Activated naive CD4-positive, alpha-beta T cell treated with anti-CD3 and anti-CD28 coated beads for 36 hours (primary cell): ENCODE measurements at regions of chr11 and their contacts with region 1.

Region 1: DNA sequence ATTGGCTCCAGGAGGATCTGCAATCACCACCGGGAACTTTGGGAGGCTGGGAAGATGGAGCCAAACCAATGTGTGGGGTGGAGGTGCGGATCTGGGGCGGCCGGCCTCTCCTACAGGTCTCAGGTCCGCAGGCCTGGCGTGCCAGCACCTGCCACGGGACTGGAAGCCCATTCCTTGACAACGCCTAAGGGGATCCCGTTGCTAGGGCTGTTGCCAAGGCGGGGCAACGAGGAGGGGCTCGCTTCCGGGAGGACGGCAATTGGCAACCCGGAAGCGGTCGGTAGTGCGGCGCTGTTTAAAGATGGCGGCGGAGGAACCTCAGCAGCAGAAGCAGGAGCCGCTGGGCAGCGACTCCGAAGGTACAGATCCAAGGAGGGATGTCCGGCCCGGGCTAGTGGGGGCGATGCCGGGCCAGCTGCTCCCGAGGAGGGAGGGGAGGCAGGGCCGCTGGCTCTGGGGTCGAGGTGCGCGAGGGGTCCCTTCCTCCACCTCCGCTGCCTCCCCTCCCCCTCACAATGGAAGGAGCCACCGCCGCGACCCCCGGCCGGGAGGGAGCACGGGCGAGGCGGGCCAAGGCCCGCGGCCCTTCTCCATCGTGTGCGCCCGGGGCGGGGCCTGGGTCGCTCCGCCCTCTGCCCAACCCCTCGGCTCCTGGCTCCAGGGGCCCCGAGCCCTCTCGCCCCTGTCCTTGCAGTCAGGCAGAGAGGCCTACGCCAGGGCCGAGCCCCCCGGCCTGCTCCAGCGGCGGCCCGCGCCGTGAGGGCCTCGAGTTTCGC is at the start of gene OTUB1:
- DNase-seq: peak; percentile 91
- H3K4me3 Mint-ChIP-seq: peak within 1 kb of the TSS; percentile 94
- H3K27ac Mint-ChIP-seq: peak within 1 kb of the TSS; percentile 93
- H3K4me1 Mint-ChIP-seq: peaks cover 30% of the 10 kb centered on the region
- H3K27me3 Mint-ChIP-seq: no peaks in the 10 kb centered on the region
- total RNA-seq, gene OTUB1: 61.9 to 63.0 TPM

Region 2: DNA sequence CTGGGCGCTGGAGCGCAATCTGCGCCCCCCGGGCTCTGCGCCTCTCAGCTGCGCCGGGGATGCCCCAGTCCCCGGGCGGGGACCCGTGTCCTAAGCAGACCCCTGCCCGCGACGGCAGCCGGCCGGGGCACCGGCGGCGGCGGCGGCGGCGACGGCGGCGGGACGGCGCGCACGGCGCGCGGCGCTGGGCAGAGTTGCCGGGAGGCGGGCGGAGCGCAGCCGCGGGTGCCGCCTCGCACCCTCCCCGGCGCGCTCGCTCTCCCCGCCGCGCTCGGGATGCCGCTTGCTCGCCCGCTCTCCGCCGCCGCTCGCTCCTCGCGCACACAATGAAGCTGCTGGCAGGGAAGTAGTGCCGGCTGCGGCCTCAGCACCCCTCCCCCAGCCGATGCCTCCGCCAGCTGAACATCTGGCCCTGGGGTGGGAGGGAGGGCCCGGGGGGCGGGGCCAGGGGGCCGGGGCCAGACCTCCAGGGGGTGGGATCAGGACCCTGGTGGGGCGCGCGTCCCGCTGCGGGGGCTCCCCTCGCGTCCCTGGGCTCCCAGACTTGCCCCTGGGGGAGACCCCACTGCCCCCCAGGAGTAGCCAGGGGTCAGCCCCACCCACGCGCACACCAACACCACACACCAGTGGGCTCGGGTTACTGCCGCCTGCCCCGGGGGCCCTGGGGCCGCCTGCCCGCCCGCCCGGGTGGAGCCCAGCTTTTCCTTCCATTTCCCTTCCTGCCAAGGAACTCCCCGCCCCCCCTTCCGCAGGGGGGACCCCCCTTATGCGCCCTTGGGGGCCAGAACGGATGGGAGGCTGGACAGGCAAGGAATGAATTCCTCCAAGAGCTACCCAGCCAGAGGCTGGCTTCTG is 69.3 kb before region 1 on chr11 and contains the start of gene RCOR2:
- CTCF ChIA-PET with region 1: no interaction called
- intact Hi-C with region 1: loop called (anchors 5 kb)
- DNase-seq: peak; percentile 63
- H3K4me3 Mint-ChIP-seq: peak within 1 kb of the TSS; percentile 79
- H3K27ac Mint-ChIP-seq: no peak within 1 kb of the TSS
- H3K4me1 Mint-ChIP-seq: peaks cover 15% of the 10 kb centered on the region
- H3K27me3 Mint-ChIP-seq: no peaks in the 10 kb centered on the region
- total RNA-seq, gene RCOR2: 0.17 to 0.19 TPM

Region 3: DNA sequence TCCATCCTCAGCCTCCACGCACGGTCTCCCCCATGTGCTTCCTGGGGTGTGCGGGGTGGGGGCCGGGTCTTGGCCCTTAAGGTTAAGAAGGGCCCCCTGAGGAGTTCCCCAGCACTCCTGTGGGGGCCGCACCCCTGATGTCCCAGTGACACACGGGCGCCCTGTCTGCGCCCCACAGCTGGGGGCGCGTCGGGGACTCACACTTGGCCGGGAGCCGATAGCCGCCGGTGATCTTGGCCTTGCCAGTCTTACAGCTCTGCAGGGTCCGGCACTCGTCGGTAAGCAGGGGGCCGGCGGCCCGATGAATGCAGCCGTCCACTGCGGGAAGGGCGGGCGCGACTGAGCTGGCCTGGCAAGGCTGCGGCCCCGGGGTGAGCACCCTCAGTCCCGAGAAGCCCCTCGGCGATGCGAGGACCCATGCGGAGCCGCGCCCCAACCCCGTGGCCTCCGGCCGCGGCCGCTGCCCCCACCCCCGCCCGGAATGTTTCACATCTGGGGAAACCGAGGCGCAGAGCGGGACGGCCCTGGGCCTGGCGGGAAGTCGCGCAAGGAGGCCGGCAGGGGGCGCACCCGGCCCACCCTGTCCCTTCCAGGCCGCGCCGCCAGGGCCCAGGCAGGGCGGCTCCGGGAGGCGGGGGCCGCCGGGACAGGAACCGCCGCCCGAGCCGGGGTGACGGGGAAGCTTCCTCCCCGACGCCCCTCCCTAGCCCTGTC is 13.8 kb after region 1 on chr11:
- CTCF ChIA-PET with region 1: interaction called, 11 read pairs
- intact Hi-C with region 1: no loop called
- DNase-seq: peak; percentile 72
- H3K4me3 Mint-ChIP-seq: no peak overlapping the region
- H3K27ac Mint-ChIP-seq: no peak overlapping the region
- H3K4me1 Mint-ChIP-seq: peaks cover 5% of the 10 kb centered on the region
- H3K27me3 Mint-ChIP-seq: peaks cover 6% of the 10 kb centered on the region

Region 4: DNA sequence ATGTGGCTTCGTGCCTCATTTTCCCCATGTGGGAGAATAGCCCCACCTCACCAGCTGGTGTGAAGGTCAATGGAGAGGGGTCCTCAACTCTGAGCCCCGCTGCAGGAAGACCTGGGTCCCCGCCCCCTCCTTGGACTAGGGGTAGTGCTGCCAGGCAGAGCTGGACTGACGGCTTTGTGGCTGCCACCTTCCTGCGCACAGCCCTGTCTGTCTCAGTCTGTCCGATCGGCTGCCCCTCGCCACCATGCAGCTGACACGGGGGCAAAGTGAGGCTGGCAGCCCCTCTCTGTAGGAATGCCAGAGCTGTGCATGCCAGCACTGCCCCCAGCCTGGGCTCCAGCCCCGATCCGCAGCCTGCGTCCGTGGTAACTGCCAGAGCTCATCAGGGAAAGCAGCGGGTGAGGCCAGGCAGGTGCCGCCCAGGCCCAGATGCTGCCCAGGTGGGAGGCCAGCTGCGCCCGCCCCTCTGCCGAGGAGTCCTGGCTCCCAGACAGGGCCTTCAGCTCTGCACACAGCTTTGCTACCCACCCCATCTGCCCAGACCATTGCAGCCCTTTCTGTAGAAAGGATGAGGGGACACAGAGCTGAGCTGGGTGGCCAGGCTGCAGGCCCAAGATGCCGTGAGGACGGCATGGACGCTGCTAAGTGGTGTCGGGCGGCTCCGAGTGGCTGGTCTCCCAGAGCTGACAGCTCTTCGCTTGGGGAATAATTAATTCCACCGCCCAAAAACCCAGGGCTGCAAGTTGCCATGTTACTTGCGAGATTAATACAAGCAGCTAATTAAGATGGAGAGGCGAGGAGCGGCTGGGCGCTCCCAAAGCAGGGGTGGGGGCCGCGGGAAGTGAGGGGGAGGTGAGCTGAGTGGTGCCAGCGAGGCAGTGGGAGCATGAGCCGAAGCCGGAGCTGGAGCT is 29.8 kb after region 1 on chr11:
- CTCF ChIA-PET with region 1: no interaction called
- intact Hi-C with region 1: loop called (anchors 2 kb)
- DNase-seq: no peak
- H3K4me3 Mint-ChIP-seq: no peak overlapping the region
- H3K27ac Mint-ChIP-seq: no peak overlapping the region
- H3K4me1 Mint-ChIP-seq: no peaks in the 10 kb centered on the region
- H3K27me3 Mint-ChIP-seq: no peaks in the 10 kb centered on the region